HepG2 (cell line): ENCODE measurements at regions of chr16 and their contacts with region 1.

Region 1: DNA sequence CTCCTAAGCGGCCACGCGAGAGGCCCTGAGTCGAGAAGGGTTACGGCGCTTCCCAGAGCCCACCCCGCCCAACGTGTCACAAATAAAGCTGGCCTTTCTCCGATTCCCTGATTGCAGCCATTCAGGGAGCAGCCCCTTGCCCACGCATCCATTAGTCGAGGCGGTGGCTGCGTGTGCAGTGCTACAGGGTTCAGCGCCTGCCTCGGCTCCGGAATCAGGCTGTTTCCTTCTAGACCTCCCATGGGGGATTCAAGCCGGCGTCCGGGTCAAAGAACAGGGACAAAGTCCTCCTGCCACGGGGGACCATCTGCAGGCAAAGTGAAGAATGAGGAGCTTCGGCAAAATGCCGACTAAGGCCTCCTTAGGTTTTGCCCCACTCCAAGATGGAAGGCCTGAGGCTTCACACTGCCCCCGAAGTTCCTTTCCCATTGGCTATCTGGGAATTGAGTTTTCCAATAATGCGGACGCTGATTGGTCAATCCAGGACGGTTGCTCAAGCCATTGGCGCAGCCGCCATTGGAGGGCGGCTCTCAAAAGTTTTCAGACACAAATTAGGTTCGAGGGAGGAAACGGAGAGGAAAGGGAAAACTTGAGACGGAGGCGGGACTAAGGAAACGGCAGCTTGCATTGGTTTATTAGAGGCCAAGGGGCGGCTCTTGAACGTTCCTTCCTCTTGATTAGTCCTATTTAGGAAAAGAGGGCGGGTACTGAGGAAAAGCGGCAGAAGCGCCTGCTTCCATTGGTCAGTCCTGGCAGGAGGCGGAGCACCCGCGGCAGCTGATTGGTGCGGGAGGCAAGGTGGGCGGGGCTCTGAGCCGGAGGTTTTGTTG is 430 bp upstream of the KATNB1 start:
- DNase-seq: peak; percentile 100
- ATAC-seq: peak; percentile 91
- H3K4me3 ChIP-seq: peak overlapping the region; percentile 82 to 91 (median 82)
- H3K27ac ChIP-seq: peak overlapping the region; percentile 81
- H3K4me1 ChIP-seq: peaks cover 37% of the 10 kb centered on the region
- H3K27me3 ChIP-seq: no peaks in the 10 kb centered on the region; a peak in 1 of 5 replicates
- CTCF ChIP-seq: no peak; the same call in 1 of the 2 replicates
- EP300 ChIP-seq: peak; percentile 20 to 34; a peak in 1 of 4 replicates
- POLR2A ChIP-seq: peak; percentile 89 to 90; a peak in 3 of 4 replicates
- RAD21 ChIP-seq: peak; percentile 61; the same call in 1 of the 2 replicates

Region 2: DNA sequence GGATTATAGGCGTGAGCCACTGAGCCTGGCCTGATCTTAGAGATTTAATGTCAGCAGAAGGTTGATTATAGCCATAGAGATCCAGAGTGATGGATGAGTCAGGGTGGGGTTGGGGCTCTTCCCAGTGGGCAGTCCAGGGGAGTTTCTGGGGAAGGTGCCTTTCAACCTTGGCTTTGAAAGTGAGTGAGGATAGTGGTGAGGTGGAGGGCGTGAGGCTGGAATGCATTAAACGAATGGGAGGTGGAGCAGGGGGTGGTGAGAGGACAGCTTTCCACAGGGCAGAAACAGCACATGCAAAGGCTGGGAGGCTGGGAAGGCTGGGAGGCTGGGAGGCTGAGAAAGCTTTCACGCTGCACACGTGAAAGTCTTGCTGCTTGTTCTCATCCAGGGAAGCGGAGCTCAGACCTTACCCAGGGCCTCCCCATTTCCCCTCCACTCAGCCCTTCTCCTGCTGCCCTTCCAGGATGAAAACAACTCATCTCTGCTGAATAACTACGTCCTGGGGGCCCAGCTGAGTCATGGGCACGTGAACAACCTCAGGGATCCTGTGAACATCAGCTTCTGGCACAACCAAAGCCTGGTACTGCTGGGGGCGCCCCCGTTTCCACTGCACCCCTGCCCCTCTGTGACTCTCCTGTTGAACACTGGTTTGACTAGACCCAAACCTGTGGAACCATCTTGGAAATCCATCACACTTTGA is 170.4 kb before region 1 on chr16:
- CTCF ChIA-PET with region 1: no interaction called
- POLR2A ChIA-PET with region 1: no interaction called
- in situ Hi-C with region 1: no loop called
- intact Hi-C with region 1: no loop called
- DNase-seq: no peak
- ATAC-seq: no peak
- H3K4me3 ChIP-seq: no peak overlapping the region
- H3K27ac ChIP-seq: no peak overlapping the region
- H3K4me1 ChIP-seq: peaks cover 10% of the 10 kb centered on the region
- H3K27me3 ChIP-seq: peaks cover 4 to 14% of the 10 kb centered on the region in 2 experiments; a peak in 3 of 5 replicates
- CTCF ChIP-seq: no peak
- EP300 ChIP-seq: no peak
- POLR2A ChIP-seq: no peak
- RAD21 ChIP-seq: no peak

Region 3: GRCh38 chr16:57591086-57591869 is 143.9 kb before region 1 on chr16:
- CTCF ChIA-PET with region 1: no interaction called
- POLR2A ChIA-PET with region 1: no interaction called
- in situ Hi-C with region 1: no loop called
- intact Hi-C with region 1: loop called (anchors 5 kb)
- DNase-seq: peak; percentile 80
- ATAC-seq: peak; percentile 99
- H3K4me3 ChIP-seq: no peak overlapping the region
- H3K27ac ChIP-seq: no peak overlapping the region
- H3K4me1 ChIP-seq: peaks cover 9% of the 10 kb centered on the region; the same call in 1 of the 2 replicates
- H3K27me3 ChIP-seq: no peaks in the 10 kb centered on the region; a peak in 1 of 5 replicates
- CTCF ChIP-seq: peak; percentile 97
- EP300 ChIP-seq: no peak
- POLR2A ChIP-seq: no peak
- RAD21 ChIP-seq: peak; percentile 91

Region 4: DNA sequence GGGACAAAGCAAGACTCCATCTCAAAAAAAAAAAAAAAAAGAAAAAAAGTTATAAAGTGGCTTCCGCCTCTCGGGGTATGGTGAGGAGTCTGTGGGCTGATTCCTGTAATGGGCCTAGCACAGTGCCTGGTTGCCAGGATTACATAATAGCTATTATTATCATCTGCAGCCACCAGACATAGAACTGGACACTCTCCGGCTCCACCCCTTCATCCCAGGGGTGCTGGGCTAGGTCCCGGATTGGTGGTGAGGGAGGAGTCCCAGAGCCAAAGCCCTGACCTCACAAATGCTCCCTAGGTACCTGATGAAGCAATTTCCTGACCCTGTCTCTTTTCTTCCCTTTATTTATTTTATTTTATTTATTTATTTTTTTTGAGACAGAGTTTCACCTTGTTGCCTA is 118.3 kb before region 1 on chr16:
- CTCF ChIA-PET with region 1: no interaction called
- POLR2A ChIA-PET with region 1: no interaction called
- in situ Hi-C with region 1: no loop called
- intact Hi-C with region 1: no loop called
- DNase-seq: no peak
- ATAC-seq: no peak
- H3K4me3 ChIP-seq: no peak overlapping the region
- H3K27ac ChIP-seq: no peak overlapping the region
- H3K4me1 ChIP-seq: peaks cover 62% of the 10 kb centered on the region
- H3K27me3 ChIP-seq: peaks cover 0 to 19% of the 10 kb centered on the region in 2 experiments; a peak in 3 of 5 replicates
- CTCF ChIP-seq: no peak
- EP300 ChIP-seq: no peak
- POLR2A ChIP-seq: no peak
- RAD21 ChIP-seq: no peak

Region 5: GRCh38 chr16:57648590-57649442 is 86.3 kb before region 1 on chr16:
- CTCF ChIA-PET with region 1: interaction called, 7 read pairs
- POLR2A ChIA-PET with region 1: interaction called, 3 read pairs
- in situ Hi-C with region 1: no loop called
- intact Hi-C with region 1: loop called (anchors 1 kb)
- DNase-seq: peak; percentile 83
- ATAC-seq: peak; percentile 81
- H3K4me3 ChIP-seq: no peak overlapping the region
- H3K27ac ChIP-seq: no peak overlapping the region
- H3K4me1 ChIP-seq: peaks cover 29% of the 10 kb centered on the region
- H3K27me3 ChIP-seq: no peaks in the 10 kb centered on the region
- CTCF ChIP-seq: peak; percentile 100
- EP300 ChIP-seq: no peak; a peak in 1 of 4 replicates
- POLR2A ChIP-seq: no peak
- RAD21 ChIP-seq: peak; percentile 100

Region 6: GRCh38 chr16:57667526-57668258 is 67.4 kb before region 1 on chr16:
- CTCF ChIA-PET with region 1: no interaction called
- POLR2A ChIA-PET with region 1: interaction called, 41 read pairs
- in situ Hi-C with region 1: no loop called
- intact Hi-C with region 1: no loop called
- DNase-seq: peak; percentile 91
- ATAC-seq: peak; percentile 93
- H3K4me3 ChIP-seq: peak overlapping the region in 2 of 3 experiments; percentile 50 to 60; a peak in 4 of 6 replicates
- H3K27ac ChIP-seq: peak overlapping the region; percentile 79
- H3K4me1 ChIP-seq: peaks cover 69% of the 10 kb centered on the region
- H3K27me3 ChIP-seq: no peaks in the 10 kb centered on the region
- CTCF ChIP-seq: peak; percentile 79
- EP300 ChIP-seq: peak; percentile 79 to 87
- POLR2A ChIP-seq: peak; percentile 75 to 77
- RAD21 ChIP-seq: peak; percentile 42

Region 7: GRCh38 chr16:57700781-57701551 is 34.2 kb before region 1 on chr16:
- CTCF ChIA-PET with region 1: no interaction called
- POLR2A ChIA-PET with region 1: interaction called, 41 read pairs
- in situ Hi-C with region 1: no loop called
- intact Hi-C with region 1: no loop called
- DNase-seq: peak; percentile 81
- ATAC-seq: peak; percentile 58
- H3K4me3 ChIP-seq: peak overlapping the region in 2 of 3 experiments; percentile 11 to 49; a peak in 3 of 6 replicates
- H3K27ac ChIP-seq: peak overlapping the region; percentile 72
- H3K4me1 ChIP-seq: peaks cover 87% of the 10 kb centered on the region
- H3K27me3 ChIP-seq: no peaks in the 10 kb centered on the region
- CTCF ChIP-seq: no peak
- EP300 ChIP-seq: no peak
- POLR2A ChIP-seq: no peak
- RAD21 ChIP-seq: no peak

Region 8: GRCh38 chr16:57810197-57811031 is 75.3 kb after region 1 on chr16:
- CTCF ChIA-PET with region 1: no interaction called
- POLR2A ChIA-PET with region 1: interaction called, 12 read pairs
- in situ Hi-C with region 1: no loop called
- intact Hi-C with region 1: no loop called
- DNase-seq: peak; percentile 92
- ATAC-seq: peak; percentile 93
- H3K4me3 ChIP-seq: peak overlapping the region in 1 of 3 experiments; percentile 41; a peak in 2 of 6 replicates
- H3K27ac ChIP-seq: peak overlapping the region; percentile 63
- H3K4me1 ChIP-seq: peaks cover 71% of the 10 kb centered on the region
- H3K27me3 ChIP-seq: no peaks in the 10 kb centered on the region
- CTCF ChIP-seq: peak; percentile 26; the same call in 1 of the 2 replicates
- EP300 ChIP-seq: peak in 1 of 2 experiments; percentile 80; a peak in 2 of 4 replicates
- POLR2A ChIP-seq: peak; percentile 40 to 85; a peak in 3 of 4 replicates
- RAD21 ChIP-seq: no peak

Region 9: DNA sequence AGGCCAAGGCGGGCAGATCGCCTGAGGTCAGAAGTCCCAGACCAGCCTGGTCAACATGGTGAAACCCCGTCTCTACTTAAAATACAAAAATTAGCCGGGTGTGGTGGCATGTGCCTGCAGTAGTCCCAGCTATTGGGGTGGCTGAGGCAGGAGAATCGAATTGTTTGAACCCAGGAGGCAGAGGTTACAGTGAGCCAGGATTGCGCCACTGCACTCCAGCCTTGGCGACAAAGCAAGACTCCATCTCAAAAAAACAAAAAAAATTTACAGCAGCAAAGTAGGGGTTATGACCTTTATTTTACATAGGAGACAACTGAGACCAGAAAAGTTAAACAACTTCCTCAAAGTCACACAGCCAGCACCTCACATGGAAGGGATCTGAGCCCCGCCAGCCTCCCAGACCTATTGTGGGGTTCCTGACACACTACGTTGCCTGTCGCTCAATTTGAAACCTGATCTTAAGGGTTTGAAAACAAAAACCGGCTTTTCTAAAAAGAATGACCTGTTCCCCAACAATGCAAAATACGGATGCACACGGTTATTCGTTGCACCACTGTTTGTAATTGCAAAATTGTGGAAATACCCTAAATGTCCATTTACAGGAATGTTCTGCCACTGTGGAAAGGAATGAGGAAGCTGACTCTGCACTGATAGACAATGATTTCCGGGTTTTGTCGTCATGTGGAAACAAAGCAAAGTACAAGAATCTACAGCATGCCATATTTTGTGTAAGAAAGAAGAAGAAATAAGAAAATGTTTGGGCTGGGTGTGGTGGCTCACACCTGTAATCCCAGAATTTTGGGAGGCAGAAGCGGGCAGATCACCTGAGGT is 158.6 kb after region 1 on chr16:
- CTCF ChIA-PET with region 1: no interaction called
- POLR2A ChIA-PET with region 1: interaction called, 17 read pairs
- in situ Hi-C with region 1: no loop called
- intact Hi-C with region 1: no loop called
- DNase-seq: peak; percentile 99
- ATAC-seq: peak; percentile 65
- H3K4me3 ChIP-seq: peak overlapping the region; percentile 52 to 71 (median 62)
- H3K27ac ChIP-seq: peak overlapping the region; percentile 95
- H3K4me1 ChIP-seq: peaks cover 94% of the 10 kb centered on the region
- H3K27me3 ChIP-seq: no peaks in the 10 kb centered on the region; a peak in 1 of 5 replicates
- CTCF ChIP-seq: no peak
- EP300 ChIP-seq: peak; percentile 83 to 95
- POLR2A ChIP-seq: peak; percentile 13 to 59; a peak in 3 of 4 replicates
- RAD21 ChIP-seq: no peak

Region 10: GRCh38 chr16:57906382-57907316 is 171.5 kb after region 1 on chr16:
- CTCF ChIA-PET with region 1: no interaction called
- POLR2A ChIA-PET with region 1: no interaction called
- in situ Hi-C with region 1: no loop called
- intact Hi-C with region 1: no loop called
- DNase-seq: no peak
- ATAC-seq: peak; percentile 62
- H3K4me3 ChIP-seq: no peak overlapping the region
- H3K27ac ChIP-seq: no peak overlapping the region
- H3K4me1 ChIP-seq: peaks cover 20% of the 10 kb centered on the region
- H3K27me3 ChIP-seq: peaks cover 17 to 69% of the 10 kb centered on the region in 2 experiments
- CTCF ChIP-seq: peak; percentile 73
- EP300 ChIP-seq: no peak
- POLR2A ChIP-seq: no peak
- RAD21 ChIP-seq: 0 out of 2 replicates have a peak, but pooled peaks have one; percentile 31